ENCODE measurements at regions of chr2 and their contacts with region 1.

Region 1: GRCh38 chr2:54081574-54081973 is 33.8 kb upstream of the ACYP2 start:
- DNase-seq: peak; percentile 48
- H3K4me3 Mint-ChIP-seq: no peak overlapping the region
- H3K27ac Mint-ChIP-seq: peak overlapping the region; percentile 21
- H3K4me1 Mint-ChIP-seq: no peaks in the 10 kb centered on the region
- H3K27me3 Mint-ChIP-seq: no peaks in the 10 kb centered on the region
- CTCF ChIP-seq: no peak

Region 2: DNA sequence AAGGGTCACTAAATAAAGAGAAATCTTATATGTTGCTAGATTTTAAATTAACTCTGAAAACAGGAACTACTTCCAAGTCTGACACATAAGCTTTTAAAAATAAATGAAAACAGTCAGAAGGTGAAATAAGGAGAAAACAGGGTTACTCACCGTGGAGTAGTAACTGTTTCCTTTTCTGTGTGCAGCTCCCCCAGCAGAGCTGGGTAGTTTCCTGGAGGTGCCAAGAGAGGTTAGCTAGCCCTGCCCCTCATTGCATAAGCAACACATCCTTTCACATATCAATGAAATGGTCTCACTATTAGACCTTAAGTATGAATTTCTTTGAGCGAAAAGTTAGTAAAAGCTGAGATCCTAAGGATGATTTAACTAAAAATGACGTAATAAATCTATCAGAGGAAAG is 167.9 kb before region 1 on chr2:
- CTCF ChIA-PET with region 1: no interaction called
- POLR2A ChIA-PET with region 1: no interaction called
- intact Hi-C with region 1: loop called (anchors 10 kb)
- DNase-seq: peak; percentile 33
- H3K4me3 Mint-ChIP-seq: no peak overlapping the region
- H3K27ac Mint-ChIP-seq: no peak overlapping the region
- H3K4me1 Mint-ChIP-seq: no peaks in the 10 kb centered on the region
- H3K27me3 Mint-ChIP-seq: no peaks in the 10 kb centered on the region
- CTCF ChIP-seq: no peak

Measured in MCF 10A (cell line).